ENCODE measurements at regions of chr5 and their contacts with region 1.

Region 1: DNA sequence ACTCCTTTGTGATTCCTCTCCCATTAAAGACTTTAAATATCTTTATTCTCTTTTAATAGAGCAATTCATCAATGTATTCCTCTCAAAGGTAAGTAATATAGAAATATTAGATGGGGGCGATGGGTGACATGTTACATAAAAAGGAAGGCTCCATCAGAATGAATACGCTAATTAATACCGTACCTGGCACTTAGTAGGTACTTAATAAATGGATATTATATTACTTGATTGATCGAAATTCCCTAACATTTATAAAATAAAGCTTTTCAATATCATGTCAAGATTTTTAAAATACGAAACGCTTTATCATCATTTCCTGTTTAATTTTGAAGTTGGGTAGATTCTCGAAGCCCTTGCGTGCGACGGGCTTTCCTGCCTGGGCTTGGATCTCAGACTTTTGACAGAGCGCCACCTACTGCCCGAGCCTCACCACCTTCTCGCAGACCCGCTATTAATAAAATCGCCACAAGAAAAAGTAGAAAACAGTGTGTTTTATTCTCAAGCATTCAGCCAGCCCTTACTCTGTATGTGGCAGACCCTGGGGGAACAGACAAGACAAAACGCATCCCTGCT is 99.4 kb downstream of the C5orf15 start:
- DNase-seq: peak; percentile 60 to 90 (median 85)
- H3K4me3 ChIP-seq: peak overlapping the region in 1 of 4 donors; percentile 1
- H3K27ac ChIP-seq: no peak overlapping the region
- H3K4me1 ChIP-seq: peaks cover 0 to 8% of the 10 kb centered on the region in 2 donors
- H3K27me3 ChIP-seq: no peaks in the 10 kb centered on the region
- CTCF ChIP-seq: peak; percentile 69 to 88 (median 74)
- POLR2A ChIP-seq: no peak

Region 2: GRCh38 chr5:133773247-133774202 is 95.5 kb before region 1 on chr5:
- intact Hi-C with region 1: no loop called
- DNase-seq: no peak
- H3K4me3 ChIP-seq: no peak overlapping the region
- H3K27ac ChIP-seq: no peak overlapping the region
- H3K4me1 ChIP-seq: no peaks in the 10 kb centered on the region
- H3K27me3 ChIP-seq: no peaks in the 10 kb centered on the region
- CTCF ChIP-seq: no peak
- POLR2A ChIP-seq: no peak

Region 3: GRCh38 chr5:133944263-133945185 is 75.5 kb after region 1 on chr5:
- intact Hi-C with region 1: loop called in 1 of 2 experiments (anchors 5 kb)
- DNase-seq: peak; percentile 69 to 89 (median 82)
- H3K4me3 ChIP-seq: no peak overlapping the region
- H3K27ac ChIP-seq: peak overlapping the region; percentile 7 to 79 (median 58)
- H3K4me1 ChIP-seq: peaks cover 15 to 24% of the 10 kb centered on the region in 2 donors
- H3K27me3 ChIP-seq: no peaks in the 10 kb centered on the region
- CTCF ChIP-seq: peak; percentile 67 to 88 (median 80)
- POLR2A ChIP-seq: no peak

Region 4: DNA sequence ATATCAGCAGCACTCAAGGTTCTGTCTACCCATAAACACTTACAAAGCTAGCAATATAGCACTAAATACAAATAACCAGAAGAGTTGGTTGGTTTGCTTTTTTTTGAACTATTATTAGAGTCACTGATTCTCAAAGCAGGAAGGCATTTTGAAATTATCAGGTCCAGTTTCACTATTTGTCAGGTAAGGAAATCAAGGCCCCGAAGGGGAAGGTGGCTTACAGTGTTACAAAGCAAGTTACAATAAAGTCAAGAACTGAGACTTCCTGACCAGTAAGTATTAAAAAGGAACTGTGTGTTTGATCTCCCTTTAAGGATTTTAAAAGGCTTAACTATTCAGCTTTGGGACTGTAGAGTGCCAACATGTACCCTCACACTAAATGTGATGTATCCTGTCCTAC is 88.6 kb after region 1 on chr5:
- intact Hi-C with region 1: no loop called
- DNase-seq: no peak
- H3K4me3 ChIP-seq: no peak overlapping the region
- H3K27ac ChIP-seq: no peak overlapping the region
- H3K4me1 ChIP-seq: peaks cover 3 to 10% of the 10 kb centered on the region in 2 donors
- H3K27me3 ChIP-seq: no peaks in the 10 kb centered on the region
- CTCF ChIP-seq: no peak
- POLR2A ChIP-seq: no peak

Measured in adrenal gland (tissue), 19 donors.